ENCODE measurements at regions of chr13 and their contacts with region 1.

Region 1: DNA sequence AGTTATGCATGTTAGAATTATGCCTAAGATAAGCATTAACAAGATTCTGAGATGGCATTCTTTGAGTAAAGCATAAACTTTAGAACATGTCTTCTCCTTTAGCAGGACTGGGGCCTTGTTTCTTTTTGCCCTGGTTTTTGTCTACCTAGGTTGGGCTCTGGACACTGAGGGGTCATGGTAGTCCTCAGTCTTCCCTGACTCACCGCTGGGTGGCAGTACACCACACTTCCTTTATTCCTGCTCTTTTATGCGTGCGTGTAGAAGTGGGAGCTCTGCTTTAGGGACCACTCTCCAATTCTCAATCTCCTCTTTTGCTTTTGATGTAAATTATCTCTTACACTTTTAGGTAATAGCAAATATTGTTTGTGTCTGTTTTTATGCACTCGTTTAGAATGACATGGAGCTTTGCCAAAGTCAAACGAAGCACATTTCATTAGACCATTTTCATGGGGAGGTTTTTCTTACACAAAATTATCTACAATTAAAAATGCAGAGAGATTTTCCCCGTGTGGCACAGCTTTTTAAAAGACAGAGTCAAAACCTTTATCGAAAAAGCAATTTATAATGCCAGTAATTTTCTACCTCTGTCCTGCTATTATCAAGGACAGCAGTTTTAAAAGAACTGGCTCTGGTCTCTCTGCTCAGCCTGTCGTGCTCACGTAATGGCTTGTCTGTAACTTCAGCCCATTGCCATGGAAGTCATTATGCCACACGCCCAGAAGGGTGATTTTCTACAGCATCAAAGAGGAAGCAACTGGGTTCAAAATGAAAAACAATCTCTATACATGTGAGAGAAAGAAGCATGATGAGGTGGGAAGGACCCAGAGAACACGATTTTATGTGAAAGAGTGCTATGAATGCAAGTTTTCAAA is 413.9 kb downstream of the COG6 start:
- DNase-seq: peak; percentile 39 to 94 (median 84)

Region 2: DNA sequence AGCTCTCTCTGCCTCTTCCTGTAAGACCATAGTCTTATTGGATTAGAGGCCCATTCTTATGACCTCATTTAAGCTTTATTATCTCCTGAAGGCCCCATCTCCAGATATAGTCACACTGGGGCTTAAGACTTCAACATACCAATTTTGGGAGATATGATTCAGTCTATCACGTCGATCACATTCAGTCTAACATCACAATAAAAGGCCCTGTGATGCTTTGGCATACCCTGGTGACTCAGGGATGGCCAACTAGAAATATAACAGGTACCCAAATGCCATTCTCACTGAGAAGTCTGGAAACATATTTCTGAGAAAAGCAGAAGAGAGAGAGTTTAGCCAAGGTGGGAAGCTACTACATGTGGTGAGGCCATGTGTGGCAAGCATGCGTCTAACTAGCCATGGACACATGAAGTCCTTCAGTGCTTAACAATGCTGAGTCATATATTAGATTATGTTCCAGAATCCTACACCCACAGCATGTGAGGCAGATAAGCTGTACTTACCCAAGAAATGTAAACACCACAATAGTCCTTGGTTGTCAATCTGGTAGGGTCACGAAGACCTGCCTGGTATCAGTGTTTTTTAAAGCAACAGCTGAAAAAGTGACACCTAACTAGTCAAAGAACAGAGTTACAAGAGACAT is 111.9 kb after region 1 on chr13:
- intact Hi-C with region 1: loop called (anchors 10 kb)
- DNase-seq: no peak

Region 3: GRCh38 chr13:40388617-40389016 is 319.2 kb after region 1 on chr13:
- intact Hi-C with region 1: no loop called
- DNase-seq: no peak